Right ventricle myocardium inferior (tissue), 1 donor: ENCODE measurements at regions of chr1 and their contacts with region 1.

Region 1: DNA sequence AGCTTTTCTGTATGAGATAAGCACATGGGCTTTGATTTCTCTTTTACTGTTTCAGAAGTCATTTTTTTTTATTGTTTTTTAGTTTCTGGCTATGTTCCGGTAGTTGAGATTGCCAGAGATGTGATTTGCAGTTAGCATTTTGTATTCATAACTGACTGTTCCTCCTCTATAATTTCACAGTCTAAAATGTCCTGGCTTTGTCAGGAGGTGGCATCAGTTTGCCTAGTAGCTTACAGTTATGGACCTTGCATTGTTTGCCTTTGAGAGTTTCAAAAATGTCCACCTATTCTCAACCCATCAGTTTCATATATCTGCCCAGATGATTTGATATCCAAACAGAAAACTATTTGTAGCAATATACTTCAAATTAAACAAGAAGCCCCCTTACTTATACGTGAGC is 39.5 kb upstream of the ST6GALNAC3 start:
- DNase-seq: no peak
- ATAC-seq: no peak

Region 2: DNA sequence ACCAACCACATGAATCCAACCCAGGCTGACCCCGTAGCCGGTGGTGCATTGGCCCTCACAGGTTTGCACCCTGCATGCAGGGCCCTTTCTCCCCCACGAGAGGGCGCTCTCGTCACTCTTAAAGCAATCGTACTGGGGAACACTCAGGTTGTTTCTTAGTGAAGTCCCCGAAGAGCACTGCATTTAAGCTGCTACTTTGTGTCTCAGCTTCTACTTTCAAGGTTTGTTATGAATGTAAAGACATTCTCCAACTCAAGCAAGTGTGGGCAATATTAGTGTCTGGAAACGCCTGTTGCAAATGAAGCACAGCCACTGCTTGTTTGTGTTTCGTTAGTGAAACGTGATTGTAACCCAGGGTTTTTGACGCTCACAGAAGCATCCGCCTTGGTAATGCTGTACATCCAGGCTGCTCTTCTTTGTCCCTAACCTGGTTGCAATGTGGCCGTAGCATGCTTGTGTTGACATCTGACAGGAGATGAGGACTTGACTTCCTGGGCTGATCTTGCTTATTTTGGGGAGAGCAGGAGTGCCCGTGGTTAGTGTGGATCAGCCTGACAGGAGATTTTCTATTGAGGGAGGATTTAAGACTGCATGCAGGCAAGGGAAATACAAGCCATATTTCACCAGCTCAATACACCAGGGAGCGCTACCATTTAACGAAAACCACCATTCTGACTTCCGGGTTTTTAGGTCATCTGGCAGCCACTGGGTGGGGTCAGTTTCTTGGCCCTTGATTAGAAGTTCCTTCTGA is 119.3 kb after region 1 on chr1:
- intact Hi-C with region 1: loop called (anchors 5 kb)
- DNase-seq: peak; percentile 88
- ATAC-seq: peak; percentile 88